Right ventricle myocardium superior (tissue), 1 donor: ENCODE measurements at regions of chr7 and their contacts with region 1.

Region 1: GRCh38 chr7:118029826-118030422 is 154.0 kb upstream of the LSM8 start:
- DNase-seq: no peak
- ATAC-seq: no peak

Region 2: GRCh38 chr7:117777335-117778150 is 252.4 kb before region 1 on chr7:
- intact Hi-C with region 1: loop called (anchors 10 kb)
- DNase-seq: no peak
- ATAC-seq: no peak

Region 3: DNA sequence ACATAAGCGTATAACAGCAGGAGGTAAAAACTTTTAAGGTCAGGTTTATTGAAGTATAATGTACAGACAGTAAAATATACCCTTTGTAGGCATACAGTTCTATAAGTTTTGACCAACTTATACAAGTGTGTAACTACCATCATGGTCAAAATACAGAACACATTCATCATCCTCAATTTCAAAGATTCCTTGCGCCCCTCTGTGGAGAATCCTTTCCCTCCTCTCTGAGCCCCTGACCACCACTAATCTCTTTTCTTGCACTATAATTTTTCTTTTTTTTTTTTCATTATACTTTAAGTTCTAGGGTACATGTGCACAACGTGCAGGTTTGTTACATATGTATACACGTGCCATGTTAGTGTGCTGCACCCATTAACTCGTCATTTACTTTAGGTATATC is 98.6 kb before region 1 on chr7:
- intact Hi-C with region 1: no loop called
- DNase-seq: no peak
- ATAC-seq: no peak

Region 4: GRCh38 chr7:118040562-118040961 is 10.6 kb after region 1 on chr7:
- intact Hi-C with region 1: no loop called
- DNase-seq: no peak
- ATAC-seq: no peak